Left colon (tissue), 2 donors: ENCODE measurements at regions of chr3 and their contacts with region 1.

Region 1: GRCh38 chr3:172129870-172130683 is 90.7 kb downstream of the FNDC3B start:
- DNase-seq: peak; percentile 61 to 86
- ATAC-seq: peak; percentile 85

Region 2: DNA sequence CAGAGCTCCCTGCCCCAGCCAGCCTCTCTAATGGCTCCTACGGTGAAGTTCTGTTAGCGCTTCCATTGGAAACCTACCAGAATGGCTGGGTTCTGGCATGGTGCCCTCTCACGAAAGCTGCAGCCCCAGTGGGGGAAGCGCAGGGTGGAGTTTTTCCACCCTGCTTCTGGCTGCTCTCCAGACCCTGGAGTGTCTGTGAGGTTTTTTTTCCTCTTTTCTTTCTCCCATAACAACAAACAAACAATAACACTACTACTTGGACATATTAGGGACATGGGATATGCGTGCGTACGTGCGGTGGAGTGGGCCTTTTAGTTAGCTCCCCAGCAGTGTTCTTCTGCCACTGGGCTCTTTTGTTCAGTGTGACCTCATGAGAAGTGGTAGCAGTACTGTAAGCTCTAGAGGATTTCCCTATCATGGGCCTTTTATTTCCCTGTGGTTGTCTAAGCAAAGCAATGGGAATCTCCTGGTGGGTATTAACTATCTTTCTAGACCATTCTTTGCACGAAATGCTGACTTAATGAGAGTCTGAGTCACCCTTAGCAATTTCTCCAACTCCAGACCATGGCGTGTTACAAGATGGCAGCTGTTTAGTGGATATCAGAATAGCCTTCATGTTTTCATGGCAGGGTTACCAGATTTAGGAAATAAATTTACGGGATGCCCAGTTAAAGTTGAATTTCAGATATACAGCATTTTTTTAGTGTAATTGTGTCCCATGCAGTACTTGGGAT is 71.2 kb after region 1 on chr3:
- intact Hi-C with region 1: loop called in 1 of 2 experiments (anchors 10 kb)
- DNase-seq: peak; percentile 68 to 77
- ATAC-seq: peak; percentile 70

Region 3: DNA sequence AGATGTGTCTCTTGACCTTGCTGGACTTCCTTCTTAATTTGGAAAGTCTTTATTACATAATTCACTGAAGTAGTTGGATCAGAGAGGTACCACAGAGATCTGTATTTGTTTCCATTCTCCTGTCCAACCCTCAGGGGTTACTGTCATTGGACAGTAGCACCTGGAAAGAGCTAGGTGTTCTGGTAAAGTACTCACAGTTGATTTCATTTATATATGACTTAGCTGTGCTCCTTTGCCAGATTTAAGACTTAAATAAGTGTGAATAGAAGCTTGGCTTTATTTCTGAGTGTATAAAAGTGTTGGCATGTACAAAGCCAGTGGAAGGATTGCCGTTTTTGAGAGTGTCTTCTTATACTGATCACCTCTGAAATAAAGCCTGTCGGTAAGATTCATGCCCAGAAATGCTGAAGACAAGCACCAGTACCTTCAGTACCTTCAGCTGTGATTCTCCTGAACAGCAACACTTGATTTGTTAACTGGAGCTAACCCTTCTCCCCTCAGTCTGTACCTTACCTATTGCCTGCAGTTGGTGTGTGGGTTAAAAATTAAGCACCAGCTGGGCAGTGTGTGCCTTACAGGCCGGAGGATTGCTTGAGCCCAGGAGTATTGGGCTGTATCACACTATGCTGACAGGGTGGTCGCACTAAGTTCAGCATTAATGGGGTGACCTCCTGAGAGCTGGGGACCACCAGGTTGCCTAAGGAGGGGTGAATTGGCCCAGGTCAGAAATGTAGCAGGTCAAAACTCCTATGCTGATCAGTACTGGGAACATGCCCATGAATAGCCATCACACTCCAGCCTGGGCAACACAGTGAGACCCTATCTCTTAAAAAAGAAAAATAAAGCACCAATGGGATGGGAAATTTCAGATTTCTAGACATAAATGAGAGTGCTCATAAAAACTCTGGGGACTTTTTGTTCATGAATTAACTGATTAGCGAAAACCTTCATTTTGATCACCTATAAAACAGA is 107.0 kb after region 1 on chr3:
- intact Hi-C with region 1: no loop called
- DNase-seq: no peak
- ATAC-seq: peak; percentile 30